Ascending aorta (tissue), 2 donors: ENCODE measurements at regions of chr12 and their contacts with region 1.

Region 1: GRCh38 chr12:53251477-53252348 is 16.4 kb upstream of the ESPL1 start:
- DNase-seq: peak; percentile 25 to 87
- H3K4me3 ChIP-seq: peak overlapping the region; percentile 72 to 93
- H3K27ac ChIP-seq: peak overlapping the region; percentile 79 to 91
- H3K4me1 ChIP-seq: peaks cover 0 to 24% of the 10 kb centered on the region in 2 donors
- H3K27me3 ChIP-seq: no peaks in the 10 kb centered on the region
- CTCF ChIP-seq: peak; percentile 23 to 64 (median 55)

Region 2: DNA sequence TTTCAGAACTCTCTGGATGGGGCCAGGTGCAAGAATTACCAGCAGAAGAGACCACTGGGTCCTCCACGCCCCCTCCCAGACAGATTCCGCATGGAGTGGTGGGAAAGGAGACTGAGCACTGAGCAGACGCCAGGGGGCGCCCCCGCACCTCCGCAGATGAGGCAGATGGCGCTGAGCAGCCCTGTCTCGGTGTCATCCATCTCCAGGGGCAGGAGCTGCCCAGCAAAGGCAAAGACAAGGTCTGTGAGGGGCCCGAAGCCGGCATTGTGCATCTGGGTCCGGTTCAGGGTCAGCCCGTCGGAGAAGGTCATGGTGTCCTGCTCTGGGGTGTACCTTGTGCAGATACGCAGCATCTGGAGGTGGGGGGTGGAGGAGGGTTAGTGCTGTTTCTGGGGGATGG is 38.4 kb before region 1 on chr12:
- intact Hi-C with region 1: loop called (anchors 1 kb)
- DNase-seq: peak in 1 of 2 donors; percentile 88
- H3K4me3 ChIP-seq: no peak overlapping the region
- H3K27ac ChIP-seq: no peak overlapping the region
- H3K4me1 ChIP-seq: peaks cover 11 to 27% of the 10 kb centered on the region in 2 donors
- H3K27me3 ChIP-seq: no peaks in the 10 kb centered on the region
- CTCF ChIP-seq: peak; percentile 88 to 99 (median 94)

Region 3: DNA sequence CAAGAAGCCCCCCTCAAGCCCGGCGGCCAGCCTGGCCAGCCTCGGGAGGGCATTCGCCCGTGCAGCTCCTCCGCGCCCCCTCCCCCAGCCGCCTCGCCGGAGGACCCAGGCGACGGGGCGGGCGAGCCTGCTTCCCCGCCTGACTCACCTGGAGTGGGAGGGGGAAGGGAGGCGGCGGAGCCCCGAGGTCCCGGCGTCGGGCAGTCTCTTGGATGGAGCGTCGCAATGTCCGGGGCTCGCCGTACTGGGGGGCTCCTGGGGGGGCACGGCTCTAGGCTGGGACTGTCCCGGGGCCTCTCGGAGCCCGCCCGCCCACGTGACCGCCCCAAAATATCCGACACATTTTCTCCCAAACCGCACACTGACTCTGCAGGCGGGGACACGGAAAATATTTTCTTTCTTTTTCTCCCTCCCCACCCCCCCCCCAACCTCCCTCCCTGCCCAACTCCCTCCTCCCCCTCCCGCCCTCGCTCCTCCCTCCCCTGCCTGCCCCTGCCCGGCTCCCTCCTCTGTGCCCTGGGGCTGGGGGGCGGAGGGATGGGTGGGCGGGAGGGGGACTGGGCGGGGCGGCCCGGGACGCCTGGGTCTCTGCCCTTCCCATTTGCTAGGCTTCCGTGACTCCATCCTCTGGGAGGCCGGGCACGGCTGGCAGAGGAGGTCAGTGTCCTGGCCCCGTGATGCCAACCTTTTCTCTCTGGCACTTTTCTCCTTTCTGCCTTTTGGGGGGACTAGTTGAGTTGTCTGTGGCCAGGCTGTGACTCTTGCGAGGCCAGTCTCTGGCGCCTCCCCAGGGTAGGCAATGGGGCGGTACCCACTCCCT is 19.7 kb before region 1 on chr12 and contains the start of gene RARG:
- intact Hi-C with region 1: loop called (anchors 1 kb)
- DNase-seq: peak; percentile 39 to 87
- H3K4me3 ChIP-seq: peak within 1 kb of the TSS; percentile 58 to 70
- H3K27ac ChIP-seq: peak within 1 kb of the TSS; percentile 87 to 88
- H3K4me1 ChIP-seq: peaks cover 5 to 33% of the 10 kb centered on the region in 2 donors
- H3K27me3 ChIP-seq: no peaks in the 10 kb centered on the region
- CTCF ChIP-seq: no peak
- total RNA-seq, gene RARG: 29.8 TPM

Region 4: GRCh38 chr12:53365245-53365904 is 113.7 kb after region 1 on chr12:
- intact Hi-C with region 1: no loop called
- DNase-seq: no peak
- H3K4me3 ChIP-seq: no peak overlapping the region
- H3K27ac ChIP-seq: no peak overlapping the region
- H3K4me1 ChIP-seq: peaks cover 0 to under 1% of the 10 kb centered on the region in 2 donors
- H3K27me3 ChIP-seq: no peaks in the 10 kb centered on the region
- CTCF ChIP-seq: no peak

Region 5: DNA sequence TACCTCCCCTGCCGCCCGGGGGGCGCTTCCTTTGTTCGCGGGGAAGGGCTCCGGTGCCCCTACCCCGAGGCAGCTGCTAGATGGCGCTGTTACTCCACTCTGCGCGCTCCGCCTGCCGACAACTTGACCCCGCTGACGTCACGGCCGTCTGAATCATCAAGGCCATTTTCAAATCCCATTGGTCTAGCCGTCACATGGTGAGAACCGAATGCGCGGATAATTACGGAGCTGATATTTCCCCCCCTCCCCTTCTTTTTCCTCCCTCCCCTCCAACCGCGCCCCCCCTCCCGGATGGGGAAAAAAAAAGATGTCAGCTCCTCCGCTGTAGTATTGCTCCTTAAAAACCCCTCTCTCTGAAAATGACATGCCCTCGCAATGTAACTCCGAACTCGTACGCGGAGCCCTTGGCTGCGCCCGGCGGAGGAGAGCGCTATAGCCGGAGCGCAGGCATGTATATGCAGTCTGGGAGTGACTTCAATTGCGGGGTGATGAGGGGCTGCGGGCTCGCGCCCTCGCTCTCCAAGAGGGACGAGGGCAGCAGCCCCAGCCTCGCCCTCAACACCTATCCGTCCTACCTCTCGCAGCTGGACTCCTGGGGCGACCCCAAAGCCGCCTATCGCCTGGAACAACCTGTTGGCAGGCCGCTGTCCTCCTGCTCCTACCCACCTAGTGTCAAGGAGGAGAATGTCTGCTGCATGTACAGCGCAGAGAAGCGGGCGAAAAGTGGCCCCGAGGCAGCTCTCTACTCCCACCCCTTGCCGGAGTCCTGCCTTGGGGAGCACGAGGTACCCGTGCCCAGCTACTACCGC is 733.4 kb after region 1 on chr12 and contains the start of gene HOXC10:
- intact Hi-C with region 1: no loop called
- DNase-seq: peak; percentile 33 to 93
- H3K4me3 ChIP-seq: peak within 1 kb of the TSS; percentile 43 to 53
- H3K27ac ChIP-seq: no peak within 1 kb of the TSS
- H3K4me1 ChIP-seq: peaks cover 6 to 13% of the 10 kb centered on the region in 2 donors
- H3K27me3 ChIP-seq: peaks cover 61% of the 10 kb centered on the region
- CTCF ChIP-seq: peak; percentile 69 to 80 (median 72)
- total RNA-seq, gene HOXC10: not detected